ENCODE measurements at regions of chr2 and their contacts with region 1.

Region 1: GRCh38 chr2:44044281-44044720 is 48.5 kb upstream of the LRPPRC start:
- DNase-seq: peak; percentile 84
- H3K4me3 Mint-ChIP-seq: no peak overlapping the region
- H3K27ac Mint-ChIP-seq: no peak overlapping the region
- H3K4me1 Mint-ChIP-seq: no peaks in the 10 kb centered on the region
- H3K27me3 Mint-ChIP-seq: no peaks in the 10 kb centered on the region
- CTCF ChIP-seq: peak; percentile 87

Region 2: DNA sequence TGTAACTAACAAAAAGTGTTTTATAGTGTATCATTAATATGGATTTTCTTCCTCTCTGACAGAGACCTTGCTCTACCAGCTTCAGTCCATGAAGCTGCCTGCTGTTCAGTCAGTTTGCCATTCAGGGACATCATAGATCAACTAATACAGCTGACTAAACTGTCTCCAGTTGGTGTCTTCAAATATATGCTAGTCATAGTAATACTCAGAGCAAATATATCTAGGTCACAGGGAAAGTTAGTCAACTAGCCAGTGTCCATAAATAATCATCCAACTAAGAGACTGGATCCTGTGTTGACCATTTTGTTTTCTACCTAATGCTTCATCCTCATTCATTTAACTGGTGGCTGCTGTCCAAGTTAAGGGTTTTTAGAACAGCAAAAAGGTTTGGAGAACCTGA is 10.4 kb before region 1 on chr2:
- CTCF ChIA-PET with region 1: interaction called, 14 read pairs
- POLR2A ChIA-PET with region 1: no interaction called
- intact Hi-C with region 1: no loop called
- DNase-seq: no peak
- H3K4me3 Mint-ChIP-seq: no peak overlapping the region
- H3K27ac Mint-ChIP-seq: no peak overlapping the region
- H3K4me1 Mint-ChIP-seq: no peaks in the 10 kb centered on the region
- H3K27me3 Mint-ChIP-seq: peaks cover 50% of the 10 kb centered on the region
- CTCF ChIP-seq: no peak

Region 3: DNA sequence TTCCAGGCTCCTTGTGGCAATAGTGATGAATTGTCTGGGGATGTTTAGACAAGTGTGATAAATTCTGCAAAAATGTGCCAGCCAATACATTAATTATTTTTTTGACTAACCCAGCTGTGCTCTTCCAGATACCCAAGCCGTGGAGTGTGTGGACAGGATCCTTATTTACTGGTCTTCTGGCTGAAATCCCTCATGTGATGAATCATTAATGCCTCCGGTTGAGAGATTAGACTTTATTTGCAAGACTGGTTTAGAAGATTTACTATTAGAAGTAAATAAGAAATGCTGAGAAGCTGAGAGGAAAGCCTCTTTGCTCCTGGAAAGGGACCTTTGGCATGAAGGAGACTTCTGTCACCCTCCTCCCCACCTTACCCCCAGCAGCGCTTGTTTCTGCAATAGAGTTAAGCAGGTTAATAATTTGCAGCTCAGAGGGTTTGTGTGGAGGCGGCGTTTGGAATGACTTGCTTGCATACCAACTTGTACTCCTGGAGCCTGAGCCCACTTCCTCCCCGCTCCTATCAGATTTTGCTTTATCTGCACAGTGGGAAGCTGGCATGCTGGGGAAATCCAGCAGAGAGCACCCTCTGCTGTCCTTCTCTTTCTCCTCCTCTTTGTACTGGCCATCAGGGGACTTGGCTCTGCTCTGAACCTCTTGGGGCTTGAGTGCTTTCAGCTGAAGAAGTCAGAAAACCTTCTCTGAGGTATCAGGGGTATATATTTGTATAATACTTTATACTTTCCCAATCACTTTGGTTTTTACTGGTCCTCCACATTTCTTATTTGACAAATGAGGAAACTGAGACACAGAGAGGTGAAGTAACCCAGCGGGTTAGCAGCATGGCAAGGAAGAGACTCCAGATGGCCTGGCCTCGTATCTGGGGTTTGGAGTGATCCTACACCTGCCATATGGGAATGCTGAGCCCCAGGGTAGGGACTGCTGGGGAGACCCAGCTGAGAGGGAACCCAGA is 247.3 kb after region 1 on chr2:
- CTCF ChIA-PET with region 1: interaction called, 10 read pairs
- POLR2A ChIA-PET with region 1: no interaction called
- intact Hi-C with region 1: loop called (anchors 1 kb)
- DNase-seq: peak; percentile 56
- H3K4me3 Mint-ChIP-seq: no peak overlapping the region
- H3K27ac Mint-ChIP-seq: no peak overlapping the region
- H3K4me1 Mint-ChIP-seq: peaks cover 26% of the 10 kb centered on the region
- H3K27me3 Mint-ChIP-seq: no peaks in the 10 kb centered on the region
- CTCF ChIP-seq: peak; percentile 45

Region 4: GRCh38 chr2:44342854-44343253 is 298.6 kb after region 1 on chr2:
- CTCF ChIA-PET with region 1: interaction called, 4 read pairs
- POLR2A ChIA-PET with region 1: no interaction called
- intact Hi-C with region 1: loop called (anchors 5 kb)
- DNase-seq: peak; percentile 25
- H3K4me3 Mint-ChIP-seq: no peak overlapping the region
- H3K27ac Mint-ChIP-seq: no peak overlapping the region
- H3K4me1 Mint-ChIP-seq: no peaks in the 10 kb centered on the region
- H3K27me3 Mint-ChIP-seq: no peaks in the 10 kb centered on the region
- CTCF ChIP-seq: peak; percentile 36

Region 5: DNA sequence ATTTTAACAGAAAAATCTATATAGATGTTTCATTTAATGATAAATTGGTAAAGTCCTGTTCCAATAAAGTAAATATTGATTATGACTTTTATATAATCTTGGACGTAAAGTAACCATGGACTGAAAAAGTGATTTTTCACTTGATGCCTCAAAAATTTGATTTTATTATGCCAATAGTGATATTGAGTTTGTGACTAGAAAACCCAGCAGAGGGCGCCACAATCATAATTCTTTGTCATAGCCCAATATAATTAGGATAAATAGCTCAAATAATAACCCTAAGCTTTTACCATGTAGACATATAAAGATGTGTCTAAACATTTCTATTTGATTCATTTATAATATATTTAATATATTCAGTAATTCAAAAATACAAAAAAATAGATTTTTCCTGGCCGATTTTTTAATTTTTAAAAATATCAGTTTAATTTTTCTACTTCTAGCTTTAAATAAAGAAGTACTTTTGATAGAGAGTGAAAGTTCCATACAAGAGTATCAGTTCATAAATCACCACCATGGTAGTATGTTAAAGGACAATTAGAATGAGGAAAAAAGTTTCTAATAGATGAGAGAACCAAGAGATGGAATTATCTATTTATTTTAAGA is 348.1 kb after region 1 on chr2:
- CTCF ChIA-PET with region 1: interaction called, 9 read pairs
- POLR2A ChIA-PET with region 1: no interaction called
- intact Hi-C with region 1: loop called (anchors 2 kb)
- DNase-seq: peak; percentile 67
- H3K4me3 Mint-ChIP-seq: no peak overlapping the region
- H3K27ac Mint-ChIP-seq: no peak overlapping the region
- H3K4me1 Mint-ChIP-seq: no peaks in the 10 kb centered on the region
- H3K27me3 Mint-ChIP-seq: no peaks in the 10 kb centered on the region
- CTCF ChIP-seq: peak; percentile 58

Region 6: DNA sequence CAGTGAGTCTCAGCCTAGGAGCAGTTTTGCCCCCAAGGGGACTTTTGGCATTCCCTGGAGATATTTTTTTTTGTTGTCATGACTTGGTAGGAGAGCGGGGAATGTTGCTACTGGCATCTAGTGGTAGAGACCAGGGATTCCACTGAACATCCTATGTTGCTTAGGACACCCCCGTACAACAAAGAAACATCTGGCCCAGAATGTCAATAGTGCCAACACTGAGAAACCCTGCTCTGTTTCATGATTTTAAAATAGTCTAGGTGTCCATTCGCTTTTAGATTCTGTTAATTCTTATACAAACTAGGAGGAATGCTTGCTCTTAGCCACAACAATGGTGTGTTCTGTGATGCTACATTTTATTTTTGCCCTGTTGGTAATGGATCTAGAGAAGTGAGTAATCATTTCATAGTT is 671.4 kb after region 1 on chr2:
- CTCF ChIA-PET with region 1: no interaction called
- POLR2A ChIA-PET with region 1: no interaction called
- intact Hi-C with region 1: loop called (anchors 5 kb)
- DNase-seq: peak; percentile 52
- H3K4me3 Mint-ChIP-seq: no peak overlapping the region
- H3K27ac Mint-ChIP-seq: no peak overlapping the region
- H3K4me1 Mint-ChIP-seq: no peaks in the 10 kb centered on the region
- H3K27me3 Mint-ChIP-seq: no peaks in the 10 kb centered on the region
- CTCF ChIP-seq: peak; percentile 60

Region 7: DNA sequence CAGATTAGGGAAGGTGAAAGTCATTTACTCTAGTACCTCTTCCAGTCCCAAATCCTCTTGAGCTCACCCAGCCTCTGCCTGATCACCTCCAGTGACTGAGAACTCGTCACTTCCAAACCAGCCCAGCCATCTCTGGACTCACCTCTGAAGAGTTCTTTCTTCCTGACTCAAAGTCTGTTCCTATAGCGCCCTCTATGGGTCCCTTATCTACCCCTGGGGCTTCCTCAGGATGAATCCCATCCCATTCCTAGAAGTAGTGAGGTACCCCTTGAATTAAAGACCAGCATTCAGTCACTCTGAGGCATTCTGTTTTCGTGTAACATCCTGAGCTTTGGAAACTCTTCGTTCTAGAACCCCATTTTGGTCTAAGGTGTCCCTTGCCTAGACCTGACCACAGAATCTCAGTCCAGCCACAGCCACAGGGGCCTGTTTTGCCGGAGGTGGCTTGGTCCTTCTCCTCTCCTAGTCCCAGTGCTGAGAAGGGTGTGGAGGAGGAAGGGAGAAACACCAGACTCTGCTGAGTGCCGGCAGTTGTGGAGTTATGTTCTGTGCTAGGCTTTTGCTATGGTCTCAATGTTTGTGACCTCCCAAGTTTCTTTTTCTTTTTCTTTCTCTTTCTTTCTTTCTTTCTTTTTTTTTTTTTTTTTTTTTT is 929.9 kb after region 1 on chr2:
- CTCF ChIA-PET with region 1: no interaction called
- POLR2A ChIA-PET with region 1: no interaction called
- intact Hi-C with region 1: loop called (anchors 1 kb)
- DNase-seq: peak; percentile 77
- H3K4me3 Mint-ChIP-seq: no peak overlapping the region
- H3K27ac Mint-ChIP-seq: no peak overlapping the region
- H3K4me1 Mint-ChIP-seq: peaks cover 5% of the 10 kb centered on the region
- H3K27me3 Mint-ChIP-seq: no peaks in the 10 kb centered on the region
- CTCF ChIP-seq: peak; percentile 63